PC-9 (cell line): ENCODE measurements at regions of chr7 and their contacts with region 1.

Region 1: DNA sequence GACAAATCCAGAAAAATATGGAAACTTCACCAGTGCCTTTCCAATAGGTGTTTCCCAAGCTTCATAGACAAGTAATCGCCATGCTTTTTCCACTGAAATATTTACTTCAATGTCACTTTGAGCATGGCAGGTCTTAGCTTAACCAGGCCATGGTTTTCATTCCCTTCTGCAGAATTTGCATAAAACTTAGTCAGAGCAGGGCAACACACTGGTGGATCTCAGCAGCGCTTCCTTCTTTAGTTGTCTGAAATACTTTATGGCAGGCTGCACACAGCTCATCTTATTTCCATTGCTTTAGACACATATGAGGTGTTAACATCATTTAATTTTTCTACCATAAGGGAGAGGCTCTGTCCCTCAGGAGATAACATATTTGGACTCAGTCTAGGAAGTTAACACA is 102.9 kb upstream of the AHR start:
- DNase-seq: no peak
- H3K4me3 ChIP-seq: no peak overlapping the region
- H3K27ac ChIP-seq: no peak overlapping the region
- H3K4me1 ChIP-seq: no peaks in the 10 kb centered on the region
- H3K27me3 ChIP-seq: no peaks in the 10 kb centered on the region
- CTCF ChIP-seq: no peak

Region 2: DNA sequence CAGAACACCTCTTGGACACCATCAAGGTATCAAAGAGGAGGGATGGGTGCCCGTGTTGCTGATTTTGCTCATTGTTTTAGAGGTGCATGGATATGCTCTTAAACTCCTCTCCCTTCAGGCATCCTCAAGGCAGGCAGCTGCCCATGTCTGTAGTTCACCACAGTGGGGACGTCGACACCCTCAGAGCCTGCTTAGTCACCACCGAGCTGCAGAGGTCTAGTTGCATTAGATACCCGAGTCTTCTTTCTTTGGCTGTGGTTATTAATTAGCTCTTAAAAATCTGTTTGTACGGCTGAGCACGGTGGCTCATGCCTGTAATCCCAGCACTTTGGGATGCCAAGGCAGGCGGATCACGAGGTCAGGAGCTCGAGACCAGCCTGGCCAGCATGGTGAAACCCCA is 466.8 kb before region 1 on chr7:
- CTCF ChIA-PET with region 1: no interaction called
- POLR2A ChIA-PET with region 1: interaction called, 31 read pairs
- intact Hi-C with region 1: no loop called
- DNase-seq: no peak
- H3K4me3 ChIP-seq: no peak overlapping the region
- H3K27ac ChIP-seq: no peak overlapping the region
- H3K4me1 ChIP-seq: no peaks in the 10 kb centered on the region
- H3K27me3 ChIP-seq: no peaks in the 10 kb centered on the region
- CTCF ChIP-seq: no peak

Region 3: GRCh38 chr7:16982640-16983350 is 212.8 kb before region 1 on chr7:
- CTCF ChIA-PET with region 1: no interaction called
- POLR2A ChIA-PET with region 1: no interaction called
- intact Hi-C with region 1: no loop called
- DNase-seq: peak; percentile 31 to 66
- H3K4me3 ChIP-seq: no peak overlapping the region
- H3K27ac ChIP-seq: peak overlapping the region; percentile 5; the same call in 1 of the 2 replicates
- H3K4me1 ChIP-seq: peaks cover 61% of the 10 kb centered on the region
- H3K27me3 ChIP-seq: no peaks in the 10 kb centered on the region
- CTCF ChIP-seq: peak; percentile 99

Region 4: GRCh38 chr7:18727115-18727870 is 1531.7 kb after region 1 on chr7:
- CTCF ChIA-PET with region 1: no interaction called
- POLR2A ChIA-PET with region 1: no interaction called
- intact Hi-C with region 1: no loop called
- DNase-seq: no peak
- H3K4me3 ChIP-seq: no peak overlapping the region
- H3K27ac ChIP-seq: no peak overlapping the region
- H3K4me1 ChIP-seq: no peaks in the 10 kb centered on the region
- H3K27me3 ChIP-seq: no peaks in the 10 kb centered on the region
- CTCF ChIP-seq: no peak